Colonic mucosa (tissue), 4 donors: ENCODE measurements at regions of chr12 and their contacts with region 1.

Region 1: GRCh38 chr12:32455607-32456071 is 56.3 kb downstream of the FGD4 start:
- DNase-seq: peak; percentile 49
- H3K4me3 ChIP-seq: no peak overlapping the region
- H3K27ac ChIP-seq: no peak overlapping the region
- H3K4me1 ChIP-seq: peaks cover 6% of the 10 kb centered on the region
- H3K27me3 ChIP-seq: no peaks in the 10 kb centered on the region
- CTCF ChIP-seq: peak; percentile 42

Region 2: DNA sequence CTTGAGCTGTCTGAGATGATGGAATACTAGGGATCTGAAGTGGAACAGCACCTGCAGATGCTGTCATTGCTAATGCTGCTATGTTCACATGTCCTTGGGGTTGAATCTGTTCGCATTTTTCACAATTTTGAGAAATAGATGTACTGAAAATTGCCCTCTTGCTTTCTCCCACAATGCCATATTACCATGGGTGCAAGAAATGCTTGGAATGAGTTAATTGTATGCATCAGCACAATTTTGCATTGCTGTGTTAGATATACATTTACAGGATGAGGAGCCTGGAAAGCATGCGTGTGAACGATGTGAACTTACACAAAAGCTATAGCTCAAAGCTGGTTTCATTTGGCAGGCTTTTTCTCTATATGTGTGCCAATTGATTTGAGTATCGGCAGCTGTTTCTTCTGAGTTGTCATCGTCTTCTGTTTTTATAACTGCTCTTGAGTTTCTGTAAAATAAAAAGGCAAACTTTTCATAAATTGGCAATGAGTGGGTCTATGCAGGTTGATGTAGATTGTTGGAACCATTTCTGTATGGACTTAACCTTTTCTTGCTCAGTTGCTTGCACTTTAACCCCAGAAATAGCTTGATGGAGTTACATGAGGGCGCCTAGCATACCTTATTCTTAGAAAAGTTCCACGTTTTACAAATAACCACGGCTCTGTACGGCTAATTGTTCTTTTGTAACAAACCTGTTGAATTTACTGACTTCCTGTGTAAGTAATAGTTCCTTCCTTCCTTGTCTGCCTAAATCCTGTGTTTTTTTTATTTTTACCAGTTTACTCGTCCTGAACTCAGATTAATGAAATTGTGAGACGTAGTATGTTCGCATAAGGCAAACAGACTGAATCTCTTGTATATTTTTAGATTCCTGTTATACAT is 49.7 kb after region 1 on chr12:
- intact Hi-C with region 1: no loop called
- DNase-seq: no peak
- H3K4me3 ChIP-seq: no peak overlapping the region
- H3K27ac ChIP-seq: no peak overlapping the region
- H3K4me1 ChIP-seq: peaks cover 8% of the 10 kb centered on the region
- H3K27me3 ChIP-seq: no peaks in the 10 kb centered on the region
- CTCF ChIP-seq: no peak

Region 3: GRCh38 chr12:32659908-32660440 is 204.3 kb after region 1 on chr12:
- intact Hi-C with region 1: loop called (anchors 5 kb)
- DNase-seq: no peak
- H3K4me3 ChIP-seq: no peak overlapping the region
- H3K27ac ChIP-seq: no peak overlapping the region
- H3K4me1 ChIP-seq: no peaks in the 10 kb centered on the region
- H3K27me3 ChIP-seq: no peaks in the 10 kb centered on the region
- CTCF ChIP-seq: no peak

Region 4: DNA sequence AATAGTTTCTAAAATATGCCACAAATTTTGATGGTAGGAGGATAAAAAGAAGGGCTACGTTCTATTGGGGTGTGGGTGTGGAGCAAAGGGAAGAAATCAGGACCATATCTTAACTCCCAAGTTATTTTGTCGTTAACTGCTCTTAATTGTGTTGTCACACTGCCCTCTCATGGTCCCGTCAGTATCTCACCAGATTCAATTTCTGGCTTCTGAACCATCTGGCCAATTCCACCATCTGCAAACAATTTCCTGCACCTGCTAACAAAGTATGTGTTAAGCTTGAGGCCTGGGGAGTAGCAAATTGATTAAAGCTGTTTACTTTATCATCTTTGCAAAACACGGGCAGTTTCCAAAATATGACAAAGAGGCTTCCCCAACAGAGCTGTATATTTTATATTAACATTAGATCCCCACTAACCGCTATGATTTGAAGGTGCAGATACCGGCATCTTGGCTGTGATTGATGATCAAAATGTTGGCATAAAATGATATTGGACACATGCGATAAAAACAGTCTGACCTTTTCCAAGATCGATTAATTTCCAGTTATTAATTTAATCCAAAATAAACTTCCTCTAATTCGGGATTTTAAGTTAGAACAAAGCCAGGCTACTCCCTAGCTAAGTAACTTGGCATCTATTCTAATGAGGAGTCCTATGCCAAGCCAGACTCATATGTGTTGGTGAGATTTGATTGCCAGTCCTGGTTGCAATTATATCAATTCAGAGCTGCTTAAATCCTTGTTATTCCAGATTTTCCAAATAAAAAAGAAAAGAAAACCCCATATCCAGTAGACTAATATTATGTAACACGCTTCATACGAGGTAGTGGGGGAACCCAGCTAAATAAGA is 216.5 kb after region 1 on chr12:
- intact Hi-C with region 1: loop called (anchors 2 kb)
- DNase-seq: peak; percentile 51
- H3K4me3 ChIP-seq: no peak overlapping the region
- H3K27ac ChIP-seq: no peak overlapping the region
- H3K4me1 ChIP-seq: no peaks in the 10 kb centered on the region
- H3K27me3 ChIP-seq: no peaks in the 10 kb centered on the region
- CTCF ChIP-seq: peak; percentile 28